Naive thymus-derived CD4-positive, alpha-beta T cell (primary cell): ENCODE measurements at regions of chr19 and their contacts with region 1.

Region 1: DNA sequence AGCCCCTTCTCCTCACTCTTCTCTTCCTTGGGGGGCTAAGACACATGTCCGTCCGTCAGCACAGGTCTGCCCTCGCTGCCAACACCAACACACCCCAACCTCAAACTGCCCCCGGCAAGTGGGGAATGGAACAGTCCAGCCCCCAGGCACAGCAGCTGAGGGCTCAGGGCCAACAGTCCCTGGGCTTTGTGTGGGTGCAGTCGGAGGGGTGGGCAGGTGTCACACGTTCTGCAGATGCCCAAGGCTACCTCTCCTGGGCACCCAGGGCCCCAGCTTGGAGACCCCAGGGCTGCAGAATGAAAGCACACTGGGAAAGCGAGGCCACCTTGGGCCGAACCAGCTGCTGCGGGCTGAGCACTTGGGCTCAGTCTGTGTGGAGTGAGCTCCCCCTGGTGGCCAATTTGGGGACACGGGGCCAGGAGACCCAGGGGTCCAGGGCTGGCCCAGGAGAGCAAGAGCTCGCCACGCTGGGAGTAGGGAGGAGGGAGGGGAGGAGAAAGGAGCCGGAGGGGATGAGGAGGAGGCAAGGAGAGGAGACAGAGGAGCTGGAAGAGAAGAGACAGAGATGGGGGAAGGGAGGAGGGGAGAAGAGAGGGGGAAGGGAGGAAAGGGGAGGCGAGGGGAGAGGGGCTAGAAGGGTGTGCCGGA is 14.0 kb upstream of the ATP8B3 start:
- DNase-seq: peak; percentile 55 to 81 (median 71)
- ATAC-seq: peak; percentile 85
- H3K4me3 ChIP-seq: no peak overlapping the region
- H3K4me3 Mint-ChIP-seq: no peak overlapping the region
- H3K27ac ChIP-seq: no peak overlapping the region
- H3K27ac Mint-ChIP-seq: peak overlapping the region in 2 of 9 donors; percentile 5 to 71
- H3K4me1 ChIP-seq: peaks cover 3 to 6% of the 10 kb centered on the region in 2 donors
- H3K4me1 Mint-ChIP-seq: peaks cover 0 to 5% (median 0%) of the 10 kb centered on the region in 7 donors
- H3K27me3 ChIP-seq: no peaks in the 10 kb centered on the region
- H3K27me3 Mint-ChIP-seq: no peaks in the 10 kb centered on the region

Region 2: DNA sequence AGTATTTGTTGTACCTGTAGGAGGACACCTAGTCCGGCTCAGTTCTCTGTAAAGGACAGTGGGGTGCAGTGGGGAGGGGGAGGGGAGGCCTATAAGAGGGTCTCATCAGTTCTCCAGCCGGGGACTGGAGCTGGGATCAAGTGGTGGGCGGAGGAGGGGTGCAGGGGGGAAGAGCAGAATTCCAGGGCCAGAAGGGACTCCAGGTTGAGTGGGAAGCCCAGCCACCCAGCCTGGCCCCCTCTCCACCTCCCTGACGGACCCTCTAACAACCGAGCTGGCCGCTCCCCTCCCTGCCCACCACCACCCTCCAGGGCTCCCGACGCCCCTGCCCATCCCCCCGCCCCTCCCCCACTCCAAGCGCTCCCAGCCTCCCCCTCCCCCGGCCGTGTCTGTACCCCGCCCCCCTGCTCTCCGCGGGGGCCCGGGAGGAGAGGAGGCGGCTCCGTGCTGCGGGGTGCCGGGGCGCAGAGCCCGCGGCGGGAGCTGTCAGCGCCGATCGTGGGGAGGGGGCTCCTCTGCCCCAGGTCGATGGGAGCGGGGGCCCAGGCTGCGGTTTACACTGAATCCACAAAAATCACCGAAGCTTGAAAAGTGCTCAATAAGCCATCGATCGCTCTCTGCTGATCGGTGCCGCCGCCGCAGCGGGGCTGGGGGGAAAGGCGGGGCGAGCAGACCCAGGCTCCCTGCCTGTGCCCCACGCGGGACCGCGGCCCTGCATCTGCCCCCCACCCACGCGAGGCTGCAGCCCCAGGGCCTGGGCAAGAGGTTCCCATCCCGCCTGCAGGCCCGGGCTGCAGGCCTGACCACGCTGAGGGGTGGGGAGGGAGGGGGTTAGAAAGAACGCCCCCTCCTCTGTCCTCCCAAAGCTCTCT is 107.4 kb before region 1 on chr19:
- CTCF ChIA-PET with region 1: no interaction called
- POLR2A ChIA-PET with region 1: no interaction called
- intact Hi-C with region 1: no loop called
- DNase-seq: no peak
- ATAC-seq: no peak
- H3K4me3 ChIP-seq: no peak overlapping the region
- H3K4me3 Mint-ChIP-seq: no peak overlapping the region
- H3K27ac ChIP-seq: no peak overlapping the region
- H3K27ac Mint-ChIP-seq: no peak overlapping the region
- H3K4me1 ChIP-seq: no peaks in the 10 kb centered on the region
- H3K4me1 Mint-ChIP-seq: peaks cover 0 to 10% (median 3%) of the 10 kb centered on the region in 7 donors
- H3K27me3 ChIP-seq: no peaks in the 10 kb centered on the region
- H3K27me3 Mint-ChIP-seq: peaks cover 50 to 66% (median 55%) of the 10 kb centered on the region in 5 donors

Region 3: DNA sequence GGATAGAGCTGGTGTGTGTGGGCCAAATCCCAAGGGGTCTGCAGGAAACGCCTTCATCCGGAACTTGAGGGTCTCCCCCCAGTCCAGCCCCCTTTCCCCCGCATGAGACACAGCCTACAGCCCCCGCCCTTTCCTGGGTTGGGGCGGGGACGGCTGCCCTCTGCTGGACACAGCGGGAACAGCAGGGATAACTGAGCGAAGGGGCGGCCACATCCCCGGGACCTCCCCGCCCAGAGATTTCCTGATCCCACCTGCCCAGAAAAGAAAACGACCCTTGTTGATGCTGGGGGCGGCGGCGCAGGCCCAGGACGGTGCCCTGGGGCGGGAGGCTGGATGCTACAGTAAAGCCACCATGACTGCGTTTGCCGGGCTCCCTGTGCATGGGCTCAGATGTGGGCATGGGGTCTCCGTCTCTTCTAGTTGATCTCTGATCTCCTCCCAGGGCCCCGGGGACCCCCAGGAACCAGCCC is 58.5 kb before region 1 on chr19:
- CTCF ChIA-PET with region 1: interaction called, 5 read pairs
- POLR2A ChIA-PET with region 1: no interaction called
- intact Hi-C with region 1: loop called in 1 of 2 experiments (anchors 1 kb)
- DNase-seq: peak; percentile 26 to 77 (median 60)
- ATAC-seq: peak; percentile 89
- H3K4me3 ChIP-seq: no peak overlapping the region
- H3K4me3 Mint-ChIP-seq: no peak overlapping the region
- H3K27ac ChIP-seq: no peak overlapping the region
- H3K27ac Mint-ChIP-seq: no peak overlapping the region
- H3K4me1 ChIP-seq: no peaks in the 10 kb centered on the region
- H3K4me1 Mint-ChIP-seq: no peaks in the 10 kb centered on the region
- H3K27me3 ChIP-seq: peaks cover 13 to 16% of the 10 kb centered on the region in 2 donors
- H3K27me3 Mint-ChIP-seq: peaks cover 58 to 86% (median 66%) of the 10 kb centered on the region in 5 donors

Region 4: DNA sequence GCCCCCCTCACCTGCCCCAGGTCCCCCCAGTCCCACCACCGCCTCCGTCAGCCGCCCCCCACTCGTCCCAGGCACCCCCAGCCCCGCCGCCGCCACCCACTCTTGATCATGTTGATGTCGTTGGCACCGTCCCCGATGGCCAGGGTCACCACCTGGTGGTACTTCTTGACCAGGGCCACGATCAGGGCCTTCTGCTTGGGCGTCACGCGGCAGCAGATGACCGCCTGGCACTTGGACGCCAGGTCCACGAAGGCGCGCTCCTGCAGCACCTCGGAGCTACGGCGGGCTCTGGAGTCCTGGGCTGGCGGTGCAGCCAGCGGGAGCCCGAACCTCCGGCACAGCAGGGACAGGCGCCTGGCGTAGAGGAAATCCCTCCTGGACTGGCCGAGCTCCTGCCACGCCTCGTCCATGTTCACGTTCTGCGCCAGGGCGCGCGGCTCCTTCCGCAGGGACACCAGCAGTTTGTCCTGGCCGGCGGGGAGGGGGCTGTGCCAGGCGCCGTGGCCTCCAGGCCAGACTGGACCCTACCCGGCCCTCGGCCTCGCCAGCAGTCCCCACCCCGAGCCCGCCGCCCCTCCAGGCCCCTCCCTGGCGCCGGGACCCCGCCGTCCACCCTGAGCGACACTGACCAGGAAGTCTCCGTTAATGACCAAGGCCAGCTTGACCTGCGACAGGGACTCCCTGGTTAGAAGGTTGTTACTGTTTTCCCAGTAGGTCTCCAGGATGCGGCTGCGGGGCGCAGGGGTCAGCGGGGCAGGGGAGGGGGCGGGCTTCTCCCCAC is 36.6 kb before region 1 on chr19:
- CTCF ChIA-PET with region 1: interaction called, 4 read pairs
- POLR2A ChIA-PET with region 1: no interaction called
- intact Hi-C with region 1: loop called (anchors 2 kb)
- DNase-seq: no peak
- ATAC-seq: no peak
- H3K4me3 ChIP-seq: no peak overlapping the region
- H3K4me3 Mint-ChIP-seq: peak overlapping the region in 2 of 10 donors; percentile 5 to 34
- H3K27ac ChIP-seq: no peak overlapping the region
- H3K27ac Mint-ChIP-seq: no peak overlapping the region
- H3K4me1 ChIP-seq: no peaks in the 10 kb centered on the region
- H3K4me1 Mint-ChIP-seq: peaks cover 0 to 2% (median 0%) of the 10 kb centered on the region in 7 donors
- H3K27me3 ChIP-seq: no peaks in the 10 kb centered on the region
- H3K27me3 Mint-ChIP-seq: peaks cover 4 to 15% (median 5%) of the 10 kb centered on the region in 5 donors

Region 5: GRCh38 chr19:1837625-1838105 is 11.6 kb after region 1 on chr19:
- CTCF ChIA-PET with region 1: interaction called, 21 read pairs
- POLR2A ChIA-PET with region 1: interaction called, 4 read pairs
- intact Hi-C with region 1: no loop called
- DNase-seq: peak in 5 of 9 donors; percentile 31 to 75 (median 51)
- ATAC-seq: peak; percentile 84
- H3K4me3 ChIP-seq: no peak overlapping the region
- H3K4me3 Mint-ChIP-seq: peak overlapping the region in 1 of 10 donors; percentile 23
- H3K27ac ChIP-seq: no peak overlapping the region
- H3K27ac Mint-ChIP-seq: no peak overlapping the region
- H3K4me1 ChIP-seq: peaks cover 0 to under 1% of the 10 kb centered on the region in 2 donors
- H3K4me1 Mint-ChIP-seq: peaks cover 18 to 50% (median 35%) of the 10 kb centered on the region in 7 donors
- H3K27me3 ChIP-seq: no peaks in the 10 kb centered on the region
- H3K27me3 Mint-ChIP-seq: no peaks in the 10 kb centered on the region

Region 6: GRCh38 chr19:1956868-1957492 is 130.9 kb after region 1 on chr19:
- CTCF ChIA-PET with region 1: no interaction called
- POLR2A ChIA-PET with region 1: no interaction called
- intact Hi-C with region 1: no loop called
- DNase-seq: no peak
- ATAC-seq: no peak
- H3K4me3 ChIP-seq: no peak overlapping the region
- H3K4me3 Mint-ChIP-seq: no peak overlapping the region
- H3K27ac ChIP-seq: no peak overlapping the region
- H3K27ac Mint-ChIP-seq: peak overlapping the region in 2 of 9 donors; percentile 25 to 67
- H3K4me1 ChIP-seq: no peaks in the 10 kb centered on the region
- H3K4me1 Mint-ChIP-seq: peaks cover 0 to 34% (median 9%) of the 10 kb centered on the region in 7 donors
- H3K27me3 ChIP-seq: no peaks in the 10 kb centered on the region
- H3K27me3 Mint-ChIP-seq: no peaks in the 10 kb centered on the region